ENCODE measurements at regions of chr19 and their contacts with region 1.

Region 1: DNA sequence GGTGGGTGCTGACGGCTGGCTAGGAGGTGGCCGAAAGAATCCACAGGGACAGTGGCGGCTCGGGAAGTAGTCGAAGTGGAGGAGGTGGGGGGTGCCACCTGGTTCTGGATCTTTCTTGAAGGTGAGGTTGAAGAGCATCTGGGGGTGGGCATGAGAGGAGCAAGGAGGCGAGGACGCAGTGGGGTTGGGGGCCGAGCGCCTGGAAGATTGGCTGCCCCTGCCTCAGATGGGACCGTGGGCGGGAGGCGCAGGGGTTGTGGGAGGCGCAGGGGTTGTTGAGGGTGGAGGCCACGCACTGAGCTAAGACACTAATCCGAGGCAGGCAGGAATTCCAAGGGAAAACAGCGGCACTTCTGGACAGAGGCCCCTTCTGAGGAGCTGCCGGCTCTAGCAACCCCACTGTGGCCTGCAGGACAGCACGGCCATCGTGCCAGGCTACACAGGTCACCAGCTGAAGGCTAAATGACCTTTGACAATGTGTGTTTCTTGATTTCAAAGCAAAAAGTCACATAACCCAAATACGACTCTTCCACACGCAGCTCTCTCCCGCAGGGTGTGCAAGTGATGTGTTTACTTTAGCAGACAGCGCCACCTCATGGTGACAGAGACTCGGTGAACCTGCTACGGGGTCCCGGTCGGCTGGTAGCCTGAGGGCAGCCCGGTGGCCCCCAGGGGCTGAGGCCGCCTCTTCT is 44.1 kb upstream of the RANBP3 start:
- DNase-seq: peak; percentile 71 to 81
- ATAC-seq: peak; percentile 84 to 92 (median 88)
- H3K4me3 ChIP-seq: no peak overlapping the region
- H3K27ac ChIP-seq: no peak overlapping the region
- H3K4me1 ChIP-seq: no peaks in the 10 kb centered on the region
- H3K27me3 ChIP-seq: peaks cover 0 to 21% (median 0%) of the 10 kb centered on the region in 3 donors
- CTCF ChIP-seq: peak; percentile 77

Region 2: GRCh38 chr19:5803752-5804515 is 218.1 kb before region 1 on chr19:
- intact Hi-C with region 1: loop called in 1 of 2 experiments (anchors 10 kb)
- DNase-seq: peak; percentile 82 to 85
- ATAC-seq: peak; percentile 74 to 86 (median 84)
- H3K4me3 ChIP-seq: peak overlapping the region; percentile 43
- H3K27ac ChIP-seq: no peak overlapping the region
- H3K4me1 ChIP-seq: no peaks in the 10 kb centered on the region
- H3K27me3 ChIP-seq: peaks cover 0 to 78% (median 35%) of the 10 kb centered on the region in 3 donors
- CTCF ChIP-seq: peak; percentile 72

Region 3: DNA sequence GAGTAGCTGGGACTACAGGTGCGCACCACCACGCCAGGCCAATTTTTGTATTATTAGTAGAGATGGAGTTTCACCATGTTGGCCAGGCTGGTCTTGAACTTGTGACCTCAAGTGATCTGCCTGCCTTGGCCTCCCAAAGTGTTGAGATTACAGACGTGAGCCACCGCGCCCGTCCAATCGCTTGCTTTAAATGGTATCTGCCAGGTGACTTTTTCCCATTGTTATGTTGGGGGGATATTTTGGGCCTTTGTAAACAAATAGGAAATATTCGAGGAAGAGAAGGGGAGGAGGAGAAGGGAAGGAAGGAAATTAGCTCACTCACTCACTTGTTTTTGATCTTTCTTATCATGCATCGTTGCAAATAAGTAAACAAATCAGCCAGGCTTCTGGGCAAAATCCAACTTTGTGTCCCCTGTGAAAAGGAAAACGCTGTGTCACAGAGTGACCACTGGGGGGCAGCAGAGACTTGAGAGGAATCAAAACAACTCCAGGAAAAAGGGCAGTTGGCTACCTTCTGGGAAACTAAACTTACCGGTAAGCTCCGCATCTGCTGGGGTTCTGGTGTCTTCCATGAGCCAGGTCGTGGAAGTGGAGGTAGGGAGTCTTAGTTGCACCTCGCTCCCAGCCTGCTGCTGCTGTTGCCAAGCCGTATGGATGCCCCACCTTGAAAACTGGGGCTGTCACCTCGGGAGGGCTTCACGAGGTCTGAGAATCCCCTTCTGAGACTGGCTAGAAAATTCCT is 34.8 kb before region 1 on chr19:
- intact Hi-C with region 1: loop called (anchors 1 to 5 kb)
- DNase-seq: peak; percentile 66 to 80
- ATAC-seq: peak; percentile 43 to 81 (median 66)
- H3K4me3 ChIP-seq: peak overlapping the region; percentile 54
- H3K27ac ChIP-seq: no peak overlapping the region
- H3K4me1 ChIP-seq: no peaks in the 10 kb centered on the region
- H3K27me3 ChIP-seq: peaks cover 0 to 2% (median 0%) of the 10 kb centered on the region in 3 donors
- CTCF ChIP-seq: peak; percentile 91

Measured in psoas muscle (tissue), 8 donors.